Caco-2 (cell line): ENCODE measurements at regions of chr9 and their contacts with region 1.

Region 1: DNA sequence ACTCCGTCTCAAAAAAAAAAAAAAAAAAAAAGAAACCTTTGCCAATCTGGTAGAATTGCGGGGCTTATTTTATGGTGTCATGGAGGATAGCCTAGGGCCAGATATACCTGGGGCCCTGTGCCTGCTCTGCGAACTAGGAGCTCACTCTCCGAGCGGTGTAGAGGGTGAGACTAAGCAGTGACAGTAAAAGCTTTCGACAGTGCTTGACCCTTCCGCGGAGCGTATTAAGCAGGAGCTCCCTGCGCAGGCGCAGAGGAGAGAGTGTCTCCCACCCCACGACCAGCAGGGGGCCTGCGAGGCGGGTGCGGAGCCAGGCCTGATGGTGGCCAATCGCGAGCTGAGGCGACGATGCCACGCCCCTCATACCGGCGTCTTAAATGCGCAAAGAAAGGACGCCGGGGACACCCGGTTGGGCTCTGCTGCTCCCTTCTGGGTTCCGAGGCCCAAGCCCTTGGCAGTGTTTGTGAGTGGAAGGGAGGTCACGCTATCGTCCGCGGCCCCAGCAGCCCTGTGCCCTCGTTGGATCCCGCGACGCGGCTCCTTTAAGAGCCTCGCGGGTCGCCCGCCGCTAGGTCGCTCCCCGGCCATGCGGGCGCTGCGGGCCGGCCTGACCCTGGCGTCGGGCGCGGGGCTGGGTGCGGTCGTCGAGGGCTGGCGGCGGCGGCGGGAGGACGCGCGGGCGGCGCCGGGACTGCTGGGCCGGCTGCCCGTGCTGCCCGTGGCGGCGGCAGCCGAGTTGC is at the start of gene ENDOG:
- DNase-seq: peak; percentile 97 to 99
- H3K4me3 ChIP-seq: peak within 1 kb of the TSS; percentile 95
- H3K4me3 Mint-ChIP-seq: peak within 1 kb of the TSS; percentile 77
- H3K27ac Mint-ChIP-seq: peak within 1 kb of the TSS; percentile 29
- H3K4me1 ChIP-seq: no peaks in the 10 kb centered on the region; the same call in none of the 2 replicates
- H3K4me1 Mint-ChIP-seq: peaks cover 15% of the 10 kb centered on the region
- H3K27me3 ChIP-seq: no peaks in the 10 kb centered on the region
- H3K27me3 Mint-ChIP-seq: no peaks in the 10 kb centered on the region
- CTCF ChIP-seq: peak; percentile 94 to 95
- total RNA-seq, gene ENDOG: 25.9 and 30.0 TPM in 2 replicates

Region 2: GRCh38 chr9:127626752-127627493 is 1191.3 kb before region 1 on chr9:
- CTCF ChIA-PET with region 1: no interaction called
- POLR2A ChIA-PET with region 1: no interaction called
- intact Hi-C with region 1: no loop called
- DNase-seq: no peak
- H3K4me3 ChIP-seq: no peak overlapping the region
- H3K4me3 Mint-ChIP-seq: no peak overlapping the region
- H3K27ac Mint-ChIP-seq: no peak overlapping the region
- H3K4me1 ChIP-seq: no peaks in the 10 kb centered on the region
- H3K4me1 Mint-ChIP-seq: no peaks in the 10 kb centered on the region
- H3K27me3 ChIP-seq: no peaks in the 10 kb centered on the region
- H3K27me3 Mint-ChIP-seq: peaks cover 4% of the 10 kb centered on the region
- CTCF ChIP-seq: no peak

Region 3: GRCh38 chr9:128723866-128724743 is 94.2 kb before region 1 on chr9 and contains the start of gene ZDHHC12:
- CTCF ChIA-PET with region 1: interaction called, 10 read pairs
- POLR2A ChIA-PET with region 1: interaction called, 9 read pairs
- intact Hi-C with region 1: loop called (anchors 2 kb)
- DNase-seq: peak; percentile 99 to 100
- H3K4me3 ChIP-seq: peak within 1 kb of the TSS; percentile 81
- H3K4me3 Mint-ChIP-seq: peak within 1 kb of the TSS; percentile 95
- H3K27ac Mint-ChIP-seq: peak within 1 kb of the TSS; percentile 75
- H3K4me1 ChIP-seq: no peaks in the 10 kb centered on the region
- H3K4me1 Mint-ChIP-seq: peaks cover 15% of the 10 kb centered on the region
- H3K27me3 ChIP-seq: no peaks in the 10 kb centered on the region
- H3K27me3 Mint-ChIP-seq: no peaks in the 10 kb centered on the region
- CTCF ChIP-seq: no peak
- total RNA-seq, gene ZDHHC12: 71.0 and 73.7 TPM in 2 replicates

Region 4: GRCh38 chr9:128771745-128772519 is 46.3 kb before region 1 on chr9 and contains the start of gene ZER1:
- CTCF ChIA-PET with region 1: interaction called, 4 read pairs
- POLR2A ChIA-PET with region 1: no interaction called
- intact Hi-C with region 1: loop called (anchors 2 kb)
- DNase-seq: peak; percentile 92 to 96
- H3K4me3 ChIP-seq: peak within 1 kb of the TSS; percentile 84
- H3K4me3 Mint-ChIP-seq: peak within 1 kb of the TSS; percentile 97
- H3K27ac Mint-ChIP-seq: peak within 1 kb of the TSS; percentile 90
- H3K4me1 ChIP-seq: peaks cover 5% of the 10 kb centered on the region; the same call in 1 of the 2 replicates
- H3K4me1 Mint-ChIP-seq: peaks cover 10% of the 10 kb centered on the region
- H3K27me3 ChIP-seq: no peaks in the 10 kb centered on the region
- H3K27me3 Mint-ChIP-seq: no peaks in the 10 kb centered on the region
- CTCF ChIP-seq: no peak
- total RNA-seq, gene ZER1: 21.7 and 28.6 TPM in 2 replicates

Region 5: GRCh38 chr9:128838338-128838737 is 20.1 kb after region 1 on chr9:
- CTCF ChIA-PET with region 1: interaction called, 15 read pairs
- POLR2A ChIA-PET with region 1: interaction called, 11 read pairs
- intact Hi-C with region 1: no loop called
- DNase-seq: peak; percentile 88 to 89
- H3K4me3 ChIP-seq: no peak overlapping the region
- H3K4me3 Mint-ChIP-seq: no peak overlapping the region
- H3K27ac Mint-ChIP-seq: peak overlapping the region; percentile 77
- H3K4me1 ChIP-seq: peaks cover 20% of the 10 kb centered on the region
- H3K4me1 Mint-ChIP-seq: peaks cover 12% of the 10 kb centered on the region
- H3K27me3 ChIP-seq: no peaks in the 10 kb centered on the region
- H3K27me3 Mint-ChIP-seq: no peaks in the 10 kb centered on the region
- CTCF ChIP-seq: no peak

Region 6: GRCh38 chr9:128927731-128928411 is 109.6 kb after region 1 on chr9:
- CTCF ChIA-PET with region 1: interaction called, 12 read pairs
- POLR2A ChIA-PET with region 1: no interaction called
- intact Hi-C with region 1: no loop called
- DNase-seq: peak; percentile 71 to 80
- H3K4me3 ChIP-seq: no peak overlapping the region
- H3K4me3 Mint-ChIP-seq: no peak overlapping the region
- H3K27ac Mint-ChIP-seq: peak overlapping the region; percentile 62
- H3K4me1 ChIP-seq: peaks cover 5% of the 10 kb centered on the region; the same call in 1 of the 2 replicates
- H3K4me1 Mint-ChIP-seq: peaks cover 8% of the 10 kb centered on the region
- H3K27me3 ChIP-seq: no peaks in the 10 kb centered on the region
- H3K27me3 Mint-ChIP-seq: no peaks in the 10 kb centered on the region
- CTCF ChIP-seq: peak; percentile 85